ENCODE measurements at regions of chr1 and their contacts with region 1.

Region 1: DNA sequence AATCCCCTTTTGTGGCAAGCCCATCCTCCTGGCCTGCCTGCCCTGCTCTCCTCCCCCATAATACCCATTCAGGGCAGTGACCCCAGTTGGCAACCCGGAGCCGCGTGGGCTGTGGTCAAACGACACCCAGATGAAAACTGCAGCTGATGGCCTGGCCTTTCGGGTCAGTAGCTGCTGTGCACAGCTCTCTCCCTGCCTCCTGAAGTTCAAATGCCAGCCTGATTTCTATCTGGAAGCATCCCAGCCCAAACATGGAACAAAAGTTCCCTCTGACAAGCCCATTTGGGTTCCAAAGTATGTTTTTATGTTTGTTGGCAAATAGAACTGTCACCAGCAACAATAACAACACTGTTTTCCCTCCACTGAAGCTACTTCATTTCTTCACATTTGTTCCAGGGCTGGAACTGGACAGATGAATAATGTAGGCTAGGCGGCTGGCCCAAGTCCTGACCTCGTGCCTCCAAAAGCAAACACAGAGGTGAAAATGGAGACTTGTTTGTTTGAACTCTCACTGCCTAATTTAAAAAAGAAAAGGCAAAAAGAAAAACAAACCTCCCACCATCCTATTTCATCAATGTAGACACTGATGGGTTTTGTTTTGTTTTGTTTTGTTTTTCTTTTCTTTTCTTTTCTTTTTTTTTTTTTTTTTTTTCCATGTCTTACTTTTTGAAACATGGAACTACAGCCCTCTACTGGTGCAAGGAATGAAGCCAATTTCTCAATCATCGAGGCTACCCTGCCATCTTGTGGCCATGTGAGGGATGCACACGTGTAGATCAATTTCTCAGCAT is 179.0 kb downstream of the ADSS2 start:
- DNase-seq: peak; percentile 95
- H3K4me3 ChIP-seq: no peak overlapping the region
- H3K27ac ChIP-seq: peak overlapping the region; percentile 58
- H3K4me1 ChIP-seq: peaks cover 21% of the 10 kb centered on the region
- H3K27me3 ChIP-seq: no peaks in the 10 kb centered on the region
- CTCF ChIP-seq: peak; percentile 77 to 97
- POLR2A ChIP-seq: no peak

Region 2: DNA sequence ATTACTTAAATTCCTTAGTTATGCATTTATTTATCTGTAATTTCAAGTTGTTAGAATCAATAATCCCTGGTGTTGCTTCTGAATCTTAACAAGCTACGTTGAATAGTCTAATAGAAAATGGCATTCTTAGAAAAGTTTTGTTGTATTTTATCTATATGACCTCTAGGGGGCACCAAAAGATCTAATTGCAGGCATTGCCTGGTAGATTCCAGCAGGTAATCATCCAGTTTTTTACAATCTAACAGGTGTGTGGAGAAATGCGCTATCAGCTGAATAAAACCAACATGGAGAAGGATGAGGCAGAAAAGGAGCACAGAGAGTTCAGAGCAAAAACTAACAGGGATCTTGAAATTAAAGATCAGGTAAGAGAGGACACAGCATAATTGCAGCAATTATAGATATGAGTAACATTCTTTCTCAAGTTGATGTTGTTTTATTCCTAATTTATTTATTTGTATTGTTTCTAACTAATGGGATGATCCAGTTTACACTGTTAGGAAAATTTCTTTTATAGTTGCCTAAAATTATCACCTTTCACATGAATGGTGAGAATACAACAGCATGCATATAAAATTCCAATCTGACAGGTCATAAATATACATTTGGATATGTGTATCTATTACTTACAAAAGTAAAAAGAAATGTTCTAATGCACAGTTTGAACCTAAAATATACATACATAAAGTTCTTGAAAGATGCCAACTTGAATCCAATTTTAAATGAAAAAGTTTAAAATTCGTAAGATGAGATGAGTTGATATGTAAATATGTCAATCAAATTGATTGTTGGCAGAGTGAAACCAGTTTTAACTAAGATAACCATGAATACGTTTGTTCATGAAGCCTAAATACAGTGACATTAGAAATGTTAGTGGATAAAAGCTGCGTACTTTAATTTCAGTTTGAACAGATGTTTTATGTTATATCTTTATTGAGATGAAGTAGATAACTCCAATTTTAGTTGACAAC is 928.4 kb before region 1 on chr1:
- CTCF ChIA-PET with region 1: interaction called, 37 read pairs
- POLR2A ChIA-PET with region 1: no interaction called
- dilution Hi-C with region 1: no loop called
- intact Hi-C with region 1: loop called (anchors 1 kb)
- DNase-seq: peak; percentile 51
- H3K4me3 ChIP-seq: no peak overlapping the region
- H3K27ac ChIP-seq: no peak overlapping the region
- H3K4me1 ChIP-seq: peaks cover 17% of the 10 kb centered on the region
- H3K27me3 ChIP-seq: no peaks in the 10 kb centered on the region
- CTCF ChIP-seq: peak; percentile 20 to 37
- POLR2A ChIP-seq: no peak

Region 3: GRCh38 chr1:243708210-243708609 is 564.5 kb before region 1 on chr1:
- CTCF ChIA-PET with region 1: interaction called, 7 read pairs
- POLR2A ChIA-PET with region 1: no interaction called
- dilution Hi-C with region 1: no loop called
- intact Hi-C with region 1: loop called (anchors 1 kb)
- DNase-seq: peak; percentile 40
- H3K4me3 ChIP-seq: no peak overlapping the region
- H3K27ac ChIP-seq: no peak overlapping the region
- H3K4me1 ChIP-seq: peaks cover 2% of the 10 kb centered on the region
- H3K27me3 ChIP-seq: no peaks in the 10 kb centered on the region
- CTCF ChIP-seq: no peak
- POLR2A ChIP-seq: no peak

Region 4: GRCh38 chr1:243926803-243927279 is 345.8 kb before region 1 on chr1:
- CTCF ChIA-PET with region 1: interaction called, 4 read pairs
- POLR2A ChIA-PET with region 1: no interaction called
- dilution Hi-C with region 1: no loop called
- intact Hi-C with region 1: loop called (anchors 1 kb)
- DNase-seq: peak; percentile 96
- H3K4me3 ChIP-seq: peak overlapping the region in 1 of 3 experiments; percentile 1
- H3K27ac ChIP-seq: peak overlapping the region; percentile 78
- H3K4me1 ChIP-seq: peaks cover 37% of the 10 kb centered on the region
- H3K27me3 ChIP-seq: no peaks in the 10 kb centered on the region
- CTCF ChIP-seq: no peak
- POLR2A ChIP-seq: peak; percentile 64

Region 5: DNA sequence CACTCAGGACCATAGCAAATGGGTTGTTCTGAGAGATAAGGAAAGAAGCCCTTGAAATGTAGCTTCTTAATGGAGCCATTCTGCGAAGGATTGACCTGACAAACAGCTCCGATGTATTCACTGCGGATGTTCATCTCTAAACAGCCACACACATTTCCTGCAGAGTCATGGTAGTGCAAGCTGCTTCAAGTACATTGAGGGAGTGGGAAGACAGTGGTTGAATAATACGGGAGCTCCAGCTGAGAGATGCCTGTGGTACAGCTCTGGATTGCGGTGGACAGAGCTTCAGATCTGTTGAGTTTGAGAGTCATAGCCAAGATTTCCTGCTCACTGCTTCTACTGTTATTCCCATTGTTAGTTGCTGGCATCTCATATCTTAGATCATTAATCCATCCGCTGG is 134.9 kb before region 1 on chr1:
- CTCF ChIA-PET with region 1: no interaction called
- POLR2A ChIA-PET with region 1: no interaction called
- dilution Hi-C with region 1: no loop called
- intact Hi-C with region 1: loop called (anchors 1 kb)
- DNase-seq: no peak
- H3K4me3 ChIP-seq: no peak overlapping the region
- H3K27ac ChIP-seq: peak overlapping the region; percentile 75
- H3K4me1 ChIP-seq: peaks cover 26% of the 10 kb centered on the region
- H3K27me3 ChIP-seq: no peaks in the 10 kb centered on the region
- CTCF ChIP-seq: no peak
- POLR2A ChIP-seq: no peak

Region 6: GRCh38 chr1:244319283-244320132 is 46.8 kb after region 1 on chr1:
- CTCF ChIA-PET with region 1: no interaction called
- POLR2A ChIA-PET with region 1: no interaction called
- dilution Hi-C with region 1: no loop called
- intact Hi-C with region 1: loop called (anchors 2 kb)
- DNase-seq: no peak
- H3K4me3 ChIP-seq: no peak overlapping the region
- H3K27ac ChIP-seq: peak overlapping the region; percentile 16
- H3K4me1 ChIP-seq: peaks cover 49% of the 10 kb centered on the region
- H3K27me3 ChIP-seq: no peaks in the 10 kb centered on the region
- CTCF ChIP-seq: no peak
- POLR2A ChIP-seq: no peak

Measured in endothelial cell of umbilical vein (primary cell).